AG04450 (cell line): ENCODE measurements at regions of chr20 and their contacts with region 1.

Region 1: GRCh38 chr20:10982692-10983091 is 308.9 kb upstream of the JAG1 start:
- DNase-seq: peak; percentile 68
- H3K4me3 ChIP-seq: no peak overlapping the region
- H3K27ac ChIP-seq: peak overlapping the region; percentile 13
- H3K27me3 ChIP-seq: no peaks in the 10 kb centered on the region
- CTCF ChIP-seq: no peak

Region 2: GRCh38 chr20:10893331-10893730 is 89.4 kb before region 1 on chr20:
- CTCF ChIA-PET with region 1: no interaction called
- POLR2A ChIA-PET with region 1: no interaction called
- DNase-seq: no peak
- H3K4me3 ChIP-seq: no peak overlapping the region
- H3K27ac ChIP-seq: no peak overlapping the region
- H3K27me3 ChIP-seq: no peaks in the 10 kb centered on the region
- CTCF ChIP-seq: no peak

Region 3: GRCh38 chr20:10922941-10923340 is 59.8 kb before region 1 on chr20:
- CTCF ChIA-PET with region 1: no interaction called
- POLR2A ChIA-PET with region 1: interaction called, 11 read pairs
- DNase-seq: peak; percentile 91
- H3K4me3 ChIP-seq: peak overlapping the region; percentile 15; the same call in 1 of the 2 replicates
- H3K27ac ChIP-seq: peak overlapping the region; percentile 68
- H3K27me3 ChIP-seq: no peaks in the 10 kb centered on the region
- CTCF ChIP-seq: no peak

Region 4: GRCh38 chr20:11057624-11058023 is 74.9 kb after region 1 on chr20:
- CTCF ChIA-PET with region 1: no interaction called
- POLR2A ChIA-PET with region 1: no interaction called
- DNase-seq: no peak
- H3K4me3 ChIP-seq: no peak overlapping the region
- H3K27ac ChIP-seq: no peak overlapping the region
- H3K27me3 ChIP-seq: no peaks in the 10 kb centered on the region
- CTCF ChIP-seq: no peak

Region 5: DNA sequence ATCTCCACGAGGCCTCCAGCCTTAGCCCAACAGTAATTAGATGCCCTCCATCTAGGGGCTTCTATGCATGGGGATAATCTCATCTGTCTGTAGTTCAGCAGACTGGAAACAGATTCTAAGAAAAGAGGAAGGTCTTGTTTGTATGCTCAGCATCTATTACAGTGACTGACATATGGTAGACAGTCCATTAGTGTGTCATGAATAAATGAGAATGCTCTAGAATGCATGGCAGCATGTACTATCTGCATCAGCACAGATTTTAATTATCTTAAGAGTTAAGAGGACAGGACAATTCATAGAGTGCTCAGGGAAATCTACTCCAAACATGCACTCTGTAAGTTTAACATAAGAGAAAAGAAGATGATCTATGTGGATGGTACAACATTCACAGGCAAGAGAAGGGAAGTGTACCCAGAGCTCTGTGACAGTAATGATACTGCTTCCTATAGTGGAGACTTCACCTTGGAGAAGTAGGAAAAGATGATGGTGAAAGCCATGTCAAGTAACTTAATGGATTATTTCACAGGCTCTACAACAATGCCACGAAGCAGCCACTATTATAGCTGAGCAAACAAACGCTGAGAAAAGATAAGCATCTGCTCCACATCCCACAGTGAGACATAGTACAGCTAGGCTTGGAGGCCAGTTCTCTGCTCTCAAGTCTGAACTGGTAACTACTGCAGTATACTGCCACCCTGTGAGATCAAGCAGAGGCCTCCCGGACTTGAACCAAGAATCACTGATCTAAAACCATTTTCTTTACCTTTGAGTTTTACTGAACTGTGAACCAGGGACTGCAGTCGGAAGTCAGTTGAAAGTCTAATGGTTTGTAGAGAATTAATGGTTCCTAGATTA is 1716.9 kb after region 1 on chr20:
- CTCF ChIA-PET with region 1: no interaction called
- POLR2A ChIA-PET with region 1: no interaction called
- DNase-seq: no peak
- H3K4me3 ChIP-seq: no peak overlapping the region
- H3K27ac ChIP-seq: no peak overlapping the region
- H3K27me3 ChIP-seq: no peaks in the 10 kb centered on the region
- CTCF ChIP-seq: no peak